Dorsolateral prefrontal cortex (tissue), 120 donors: ENCODE measurements at regions of chr13 and their contacts with region 1.

Region 1: DNA sequence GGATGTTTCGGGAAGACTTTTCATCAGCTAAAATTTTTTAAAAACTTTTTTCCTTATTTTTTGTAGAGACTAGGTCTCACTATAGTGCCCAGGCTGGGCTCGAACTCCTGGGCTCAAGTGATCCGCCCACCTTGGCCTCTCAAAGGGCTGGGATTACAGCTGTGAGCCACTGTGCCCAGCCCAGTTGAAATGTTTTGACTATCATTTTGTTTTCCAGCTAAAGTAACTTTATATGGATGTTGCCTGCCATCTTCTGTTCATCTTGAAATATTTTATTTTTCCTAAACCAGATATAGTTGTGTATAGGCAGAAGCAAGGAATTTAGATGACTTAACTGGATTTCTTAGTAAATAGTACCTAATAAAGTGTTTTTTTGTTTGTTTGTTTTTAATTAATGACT is 7.0 kb downstream of the CAB39L start:
- DNase-seq: peak in 4 of 10 donors; percentile 11 to 51 (median 38)
- H3K4me3 ChIP-seq: no peak overlapping the region
- H3K27ac ChIP-seq: peak overlapping the region in 21 of 59 donors; percentile 7 to 58 (median 32)
- H3K27me3 ChIP-seq: no peaks in the 10 kb centered on the region
- CTCF ChIP-seq: peak; percentile 13 to 73 (median 48)

Region 2: DNA sequence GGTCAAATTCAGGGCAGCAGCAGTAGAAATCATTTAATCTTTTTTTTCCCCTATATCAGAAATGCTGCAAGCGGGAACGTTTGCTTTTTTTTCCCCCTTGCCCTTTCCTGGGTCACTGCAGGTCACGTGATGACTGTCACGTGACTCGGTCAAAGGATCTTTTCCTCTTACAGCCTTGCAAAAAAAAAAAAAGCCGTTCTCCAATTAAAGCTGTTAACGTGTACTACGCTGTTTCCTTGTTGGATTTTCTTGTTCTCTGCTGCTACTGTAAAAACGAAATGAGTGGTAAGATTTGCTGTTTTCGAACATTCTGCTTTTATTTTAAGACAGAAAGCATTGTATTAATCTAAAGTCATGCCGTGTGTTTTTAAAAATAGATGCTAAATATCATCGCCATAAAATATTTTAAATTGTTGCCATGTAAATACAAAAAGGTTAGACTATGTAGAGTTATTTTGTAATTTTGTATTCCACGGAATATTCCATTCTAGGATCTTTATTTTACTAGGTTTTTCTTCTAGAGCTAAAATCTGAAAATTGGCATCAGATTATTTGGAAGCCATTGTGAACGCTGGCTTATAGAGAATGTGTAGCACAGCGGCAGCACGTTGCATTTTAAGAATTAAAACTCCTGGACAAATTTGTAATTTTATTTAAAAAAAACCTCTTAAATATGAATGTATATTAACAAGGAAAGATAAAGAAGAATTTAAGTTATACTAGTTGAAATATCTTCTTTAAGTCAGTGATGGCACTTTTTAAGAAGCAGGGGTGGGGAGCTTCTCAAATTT is 326.6 kb before region 1 on chr13:
- intact Hi-C with region 1: loop called in 1 of 2 experiments (anchors 5 kb)
- DNase-seq: peak; percentile 60 to 86 (median 80)
- H3K4me3 ChIP-seq: peak overlapping the region; percentile 43 to 88 (median 70)
- H3K27ac ChIP-seq: peak overlapping the region in 51 of 59 donors; percentile 5 to 84 (median 62)
- H3K27me3 ChIP-seq: no peaks in the 10 kb centered on the region
- CTCF ChIP-seq: peak in 19 of 56 donors; percentile 8 to 45 (median 16)